ENCODE measurements at regions of chr17 and their contacts with region 1.

Region 1: DNA sequence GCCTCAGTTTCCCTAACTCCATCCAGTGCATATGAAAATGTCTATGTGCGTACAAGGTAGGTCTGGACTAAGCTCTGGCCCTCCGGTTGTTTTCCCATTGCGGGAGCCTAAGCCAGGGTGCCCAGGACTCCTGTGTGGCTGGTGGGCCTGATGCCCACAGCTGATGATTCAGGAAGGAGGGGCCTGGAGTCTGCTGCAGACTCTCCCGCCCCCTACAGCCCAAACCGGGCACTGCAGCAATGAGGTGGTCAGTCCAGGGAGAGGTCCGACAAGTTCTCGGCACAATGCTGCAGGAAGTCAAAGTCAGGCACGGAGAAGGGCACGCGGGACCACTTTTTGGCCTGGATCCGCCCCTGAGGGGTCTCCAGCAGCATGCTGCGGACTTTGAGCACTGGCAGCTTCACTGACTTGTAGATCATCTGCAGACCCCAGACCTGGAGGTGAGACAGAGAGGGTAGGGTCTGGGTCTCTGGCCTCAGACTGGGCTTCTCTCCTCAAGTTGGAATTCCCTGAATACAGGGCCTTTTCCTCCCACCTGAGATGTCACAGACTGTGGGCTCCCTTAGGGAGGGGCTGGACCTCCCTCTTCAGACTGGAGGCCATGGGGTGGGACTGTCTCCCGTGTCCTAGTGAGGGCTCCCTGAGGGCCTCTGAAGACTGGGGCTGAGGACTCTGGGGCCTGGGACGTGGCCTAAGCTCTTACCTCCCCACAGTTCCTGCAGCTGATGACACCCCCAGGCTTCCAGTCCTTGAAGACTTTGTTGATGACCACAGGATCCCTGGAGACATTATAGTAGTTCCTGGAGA is 3.4 kb upstream of the ZNF385C start:
- DNase-seq: peak; percentile 67 to 82
- H3K4me3 ChIP-seq: no peak overlapping the region
- H3K27ac ChIP-seq: no peak overlapping the region
- H3K4me1 ChIP-seq: peaks cover 0 to 13% (median 6%) of the 10 kb centered on the region in 4 donors
- H3K27me3 ChIP-seq: peaks cover 0 to 21% of the 10 kb centered on the region in 2 donors
- CTCF ChIP-seq: peak; percentile 66 to 73

Region 2: DNA sequence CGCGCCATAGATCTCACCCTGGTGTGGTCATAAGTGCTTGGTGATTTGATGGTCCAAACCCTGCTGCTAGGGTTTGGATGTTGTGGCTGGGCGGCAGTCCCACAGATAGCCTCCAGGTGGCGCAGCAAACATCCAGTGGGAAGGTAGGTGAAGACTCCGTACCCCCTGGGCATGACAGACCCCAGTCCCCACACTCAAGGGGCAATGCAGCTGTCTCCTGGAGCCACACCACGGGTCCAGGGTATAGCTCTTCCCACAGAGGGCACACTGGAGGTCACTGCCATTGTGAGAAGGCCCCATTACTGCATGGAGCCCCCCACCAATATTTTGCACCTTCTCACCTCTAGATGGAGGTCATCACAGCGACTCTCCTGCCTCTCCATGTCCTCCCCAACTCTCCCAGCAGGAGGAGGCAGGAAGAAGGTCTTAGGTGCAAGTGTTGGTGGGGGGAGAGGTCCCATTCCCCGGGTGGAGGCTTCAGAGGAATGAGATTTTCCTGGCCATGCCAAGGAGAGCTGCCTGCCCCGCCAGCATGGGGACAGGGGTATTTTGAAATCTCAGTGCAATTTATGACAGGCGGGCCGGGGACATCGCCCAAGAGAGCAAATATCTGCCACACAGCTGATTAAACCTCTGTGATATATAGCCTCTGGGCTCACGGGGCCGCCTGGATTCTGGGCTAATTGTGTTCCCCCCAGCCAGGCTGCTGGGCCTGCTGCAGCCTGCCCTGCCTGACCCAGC is 34.2 kb before region 1 on chr17:
- intact Hi-C with region 1: loop called (anchors 5 kb)
- DNase-seq: peak; percentile 64 to 73
- H3K4me3 ChIP-seq: no peak overlapping the region
- H3K27ac ChIP-seq: no peak overlapping the region
- H3K4me1 ChIP-seq: peaks cover 0 to 9% (median 8%) of the 10 kb centered on the region in 4 donors
- H3K27me3 ChIP-seq: peaks cover 4 to 59% of the 10 kb centered on the region in 2 donors
- CTCF ChIP-seq: peak; percentile 80 to 89

Region 3: GRCh38 chr17:42809250-42809649 is 707.5 kb after region 1 on chr17:
- intact Hi-C with region 1: no loop called
- DNase-seq: peak in 1 of 2 donors; percentile 57
- H3K4me3 ChIP-seq: no peak overlapping the region
- H3K27ac ChIP-seq: no peak overlapping the region
- H3K4me1 ChIP-seq: no peaks in the 10 kb centered on the region
- H3K27me3 ChIP-seq: no peaks in the 10 kb centered on the region
- CTCF ChIP-seq: no peak

Measured in tibial artery (tissue), 4 donors.